A673 (cell line): ENCODE measurements at regions of chr7 and their contacts with region 1.

Region 1: GRCh38 chr7:16167526-16167925 is 253.8 kb downstream of the CRPPA start:
- DNase-seq: no peak
- H3K4me3 ChIP-seq: no peak overlapping the region
- H3K27ac ChIP-seq: no peak overlapping the region
- H3K4me1 ChIP-seq: no peaks in the 10 kb centered on the region
- H3K27me3 ChIP-seq: no peaks in the 10 kb centered on the region
- CTCF ChIP-seq: no peak

Region 2: GRCh38 chr7:16123117-16123770 is 44.3 kb before region 1 on chr7:
- CTCF ChIA-PET with region 1: no interaction called
- POLR2A ChIA-PET with region 1: interaction called, 15 read pairs
- intact Hi-C with region 1: no loop called
- DNase-seq: peak; percentile 70
- H3K4me3 ChIP-seq: no peak overlapping the region
- H3K27ac ChIP-seq: no peak overlapping the region
- H3K4me1 ChIP-seq: peaks cover 9% of the 10 kb centered on the region
- H3K27me3 ChIP-seq: peaks cover 29% of the 10 kb centered on the region
- CTCF ChIP-seq: no peak

Region 3: GRCh38 chr7:16299853-16300252 is 132.3 kb after region 1 on chr7:
- CTCF ChIA-PET with region 1: no interaction called
- POLR2A ChIA-PET with region 1: no interaction called
- intact Hi-C with region 1: no loop called
- DNase-seq: no peak
- H3K4me3 ChIP-seq: no peak overlapping the region
- H3K27ac ChIP-seq: no peak overlapping the region
- H3K4me1 ChIP-seq: no peaks in the 10 kb centered on the region
- H3K27me3 ChIP-seq: peaks cover 9% of the 10 kb centered on the region
- CTCF ChIP-seq: no peak